Heart right ventricle (tissue), 16 donors: ENCODE measurements at regions of chr16 and their contacts with region 1.

Region 1: DNA sequence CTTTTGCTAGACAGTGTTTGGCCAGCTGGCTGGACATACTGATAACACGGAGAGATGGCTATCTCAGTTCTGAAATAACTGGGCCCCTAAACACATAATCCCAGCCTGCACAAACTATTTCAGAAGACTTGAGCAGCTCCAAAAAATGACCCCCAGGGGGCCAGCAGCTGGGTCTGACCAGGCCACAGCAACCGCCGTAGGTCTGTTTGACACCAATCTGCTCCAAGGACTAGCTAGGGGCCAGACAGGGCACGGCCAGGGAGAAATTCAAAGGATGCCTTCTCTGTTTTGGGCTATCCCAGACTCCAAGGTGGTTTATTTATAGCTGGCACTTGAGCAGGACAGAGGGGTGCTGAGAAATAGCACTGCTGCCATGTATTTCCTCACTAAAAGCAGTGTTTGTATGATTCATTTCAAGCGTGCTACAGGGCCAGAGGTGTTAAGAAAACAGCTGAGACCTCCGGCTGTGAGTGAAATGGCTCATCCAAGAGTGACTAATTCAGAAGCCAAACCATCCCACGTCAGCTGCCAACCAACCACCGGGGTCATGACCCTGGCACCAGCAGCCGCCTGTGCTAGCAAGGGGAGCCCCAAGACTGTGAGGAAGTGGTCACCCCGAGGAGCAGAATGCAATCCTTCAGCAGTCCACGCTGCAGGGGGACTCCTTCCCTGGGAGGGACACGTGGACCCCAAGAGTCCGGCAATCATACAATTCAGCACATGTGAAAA is 5.7 kb downstream of the GGA2 start:
- DNase-seq: peak; percentile 16 to 39
- ATAC-seq: peak in 7 of 8 donors; percentile 35 to 85 (median 41)
- H3K4me3 ChIP-seq: peak overlapping the region in 1 of 10 donors; percentile 8
- H3K27ac ChIP-seq: peak overlapping the region in 8 of 10 donors; percentile 7 to 82 (median 40)
- H3K4me1 ChIP-seq: peaks cover 14 to 94% (median 47%) of the 10 kb centered on the region in 9 donors
- H3K27me3 ChIP-seq: no peaks in the 10 kb centered on the region
- CTCF ChIP-seq: no peak

Region 2: DNA sequence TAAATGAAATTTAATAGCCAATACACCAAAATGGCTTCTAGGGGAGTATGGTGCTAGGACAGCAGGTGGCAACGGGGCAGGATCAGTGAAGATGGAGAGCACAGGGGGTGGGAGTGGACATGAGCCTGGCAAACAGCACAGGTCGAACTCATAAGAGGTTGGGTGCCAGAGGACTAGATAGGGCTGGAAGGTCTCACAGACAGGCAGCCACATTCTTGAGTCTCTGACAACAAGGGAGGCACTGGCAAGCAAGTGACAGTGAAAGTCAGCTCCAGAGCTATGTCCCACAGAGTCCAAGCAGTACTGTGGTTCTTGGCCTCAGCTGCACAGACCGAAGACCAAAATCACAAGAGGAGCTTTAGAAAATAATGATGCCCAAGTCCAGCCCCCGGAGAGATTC is 416.6 kb before region 1 on chr16:
- intact Hi-C with region 1: no loop called
- DNase-seq: peak in 1 of 2 donors; percentile 38
- ATAC-seq: peak; percentile 72 to 95 (median 91)
- H3K4me3 ChIP-seq: no peak overlapping the region
- H3K27ac ChIP-seq: peak overlapping the region in 7 of 10 donors; percentile 18 to 70 (median 49)
- H3K4me1 ChIP-seq: peaks cover 0 to 32% (median 6%) of the 10 kb centered on the region in 9 donors
- H3K27me3 ChIP-seq: no peaks in the 10 kb centered on the region
- CTCF ChIP-seq: no peak

Region 3: GRCh38 chr16:23452572-23453337 is 51.9 kb before region 1 on chr16 and contains the start of gene COG7:
- intact Hi-C with region 1: loop called in 3 of 10 experiments (anchors 5 to 10 kb)
- DNase-seq: peak; percentile 89 to 92
- ATAC-seq: peak; percentile 94 to 98 (median 96)
- H3K4me3 ChIP-seq: peak within 1 kb of the TSS; percentile 77 to 100 (median 84)
- H3K27ac ChIP-seq: peak within 1 kb of the TSS; percentile 55 to 93 (median 88)
- H3K4me1 ChIP-seq: peaks cover 0 to 43% (median 19%) of the 10 kb centered on the region in 9 donors
- H3K27me3 ChIP-seq: no peaks in the 10 kb centered on the region
- CTCF ChIP-seq: no peak
- total RNA-seq, gene COG7: 10.9 to 15.5 (median 12.9) TPM